ENCODE measurements at regions of chr16 and their contacts with region 1.

Region 1: DNA sequence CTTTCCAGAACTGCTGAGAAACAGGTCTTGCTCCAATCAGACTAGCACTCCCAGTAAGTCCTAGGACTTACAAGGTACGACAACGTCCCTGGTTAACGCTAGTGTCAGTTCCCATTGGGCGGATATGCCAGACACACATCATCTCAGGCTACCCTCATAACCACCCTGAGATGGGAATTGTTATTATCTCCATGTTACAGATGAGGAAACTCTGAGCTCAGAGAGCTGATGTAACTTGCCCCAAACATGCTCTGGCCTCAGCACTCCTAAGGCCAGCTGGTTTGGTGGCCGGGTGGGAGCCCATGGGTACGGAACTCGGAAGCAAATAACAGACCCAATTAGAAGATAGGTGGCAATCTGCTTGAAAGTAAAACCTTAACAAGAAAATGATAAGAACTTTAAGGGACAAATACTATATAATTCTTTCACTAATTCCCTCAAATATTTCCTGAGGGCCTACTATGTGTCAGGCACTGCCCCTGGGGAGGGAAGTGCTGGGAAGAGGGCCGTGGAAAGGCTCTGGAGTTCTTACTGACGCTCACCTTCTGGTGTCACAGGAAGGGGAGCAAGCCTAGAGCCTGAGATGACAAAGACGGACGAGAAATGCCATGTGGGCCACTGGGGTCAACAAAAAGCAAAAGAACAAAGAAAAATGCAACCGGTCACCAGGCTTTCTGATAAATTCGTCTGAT is 6.9 kb downstream of the CREBBP start:
- DNase-seq: peak in 1 of 4 experiments; percentile 40
- ATAC-seq: peak; percentile 72
- H3K4me3 ChIP-seq: no peak overlapping the region
- H3K27ac ChIP-seq: no peak overlapping the region; the same call in 2 of the 3 replicates
- H3K4me1 ChIP-seq: peaks cover 1 to 30% of the 10 kb centered on the region in 2 experiments; a peak in 4 of 5 replicates
- H3K27me3 ChIP-seq: no peaks in the 10 kb centered on the region
- CTCF ChIP-seq: no peak
- EP300 ChIP-seq: peak; percentile 54; the same call in 1 of the 2 replicates
- POLR2A ChIP-seq: no peak
- RAD21 ChIP-seq: no peak

Region 2: GRCh38 chr16:3780570-3780969 is 93.1 kb before region 1 on chr16:
- CTCF ChIA-PET with region 1: no interaction called
- POLR2A ChIA-PET with region 1: no interaction called
- in situ Hi-C with region 1: no loop called
- intact Hi-C with region 1: loop called (anchors 5 kb)
- DNase-seq: peak in 1 of 4 experiments; percentile 23
- ATAC-seq: peak; percentile 56
- H3K4me3 ChIP-seq: no peak overlapping the region
- H3K27ac ChIP-seq: no peak overlapping the region
- H3K4me1 ChIP-seq: peaks cover 0 to 3% of the 10 kb centered on the region in 2 experiments; a peak in 1 of 5 replicates
- H3K27me3 ChIP-seq: no peaks in the 10 kb centered on the region
- CTCF ChIP-seq: peak in 1 of 3 experiments; percentile 38; a peak in 2 of 6 replicates
- EP300 ChIP-seq: no peak
- POLR2A ChIP-seq: no peak
- RAD21 ChIP-seq: peak in 1 of 2 experiments; percentile 53; a peak in 2 of 4 replicates

Region 3: DNA sequence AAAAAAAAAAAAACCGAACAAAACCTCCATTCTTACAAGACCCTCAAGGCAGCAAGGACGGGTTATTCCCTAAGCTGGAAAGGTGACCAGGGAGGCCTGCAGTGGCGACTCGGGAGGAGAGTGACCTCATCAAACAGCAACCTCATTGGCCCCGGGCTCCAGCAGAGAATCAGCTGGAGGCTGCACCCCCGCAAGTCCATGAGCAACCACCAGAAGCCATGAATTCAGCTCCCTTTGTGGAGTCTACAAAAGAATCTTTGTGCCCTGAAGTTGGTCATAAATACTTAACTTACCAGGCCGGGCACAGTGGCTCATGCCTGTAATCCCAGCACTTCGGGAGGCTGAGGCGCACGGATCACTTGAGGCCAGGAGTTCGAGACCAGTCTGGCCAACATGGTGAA is 87.8 kb after region 1 on chr16:
- CTCF ChIA-PET with region 1: no interaction called
- POLR2A ChIA-PET with region 1: no interaction called
- in situ Hi-C with region 1: no loop called
- intact Hi-C with region 1: no loop called
- DNase-seq: peak in 3 of 4 experiments; percentile 35 to 41 (median 40)
- ATAC-seq: peak; percentile 49; the same call in 2 of the 3 replicates
- H3K4me3 ChIP-seq: no peak overlapping the region
- H3K27ac ChIP-seq: no peak overlapping the region
- H3K4me1 ChIP-seq: peaks cover 0 to 15% of the 10 kb centered on the region in 2 experiments; a peak in 3 of 5 replicates
- H3K27me3 ChIP-seq: peaks cover 50 to 71% of the 10 kb centered on the region in 2 experiments
- CTCF ChIP-seq: no peak
- EP300 ChIP-seq: no peak
- POLR2A ChIP-seq: no peak
- RAD21 ChIP-seq: no peak

Measured in K562 (cell line).